ENCODE measurements at regions of chr4 and their contacts with region 1.

Region 1: DNA sequence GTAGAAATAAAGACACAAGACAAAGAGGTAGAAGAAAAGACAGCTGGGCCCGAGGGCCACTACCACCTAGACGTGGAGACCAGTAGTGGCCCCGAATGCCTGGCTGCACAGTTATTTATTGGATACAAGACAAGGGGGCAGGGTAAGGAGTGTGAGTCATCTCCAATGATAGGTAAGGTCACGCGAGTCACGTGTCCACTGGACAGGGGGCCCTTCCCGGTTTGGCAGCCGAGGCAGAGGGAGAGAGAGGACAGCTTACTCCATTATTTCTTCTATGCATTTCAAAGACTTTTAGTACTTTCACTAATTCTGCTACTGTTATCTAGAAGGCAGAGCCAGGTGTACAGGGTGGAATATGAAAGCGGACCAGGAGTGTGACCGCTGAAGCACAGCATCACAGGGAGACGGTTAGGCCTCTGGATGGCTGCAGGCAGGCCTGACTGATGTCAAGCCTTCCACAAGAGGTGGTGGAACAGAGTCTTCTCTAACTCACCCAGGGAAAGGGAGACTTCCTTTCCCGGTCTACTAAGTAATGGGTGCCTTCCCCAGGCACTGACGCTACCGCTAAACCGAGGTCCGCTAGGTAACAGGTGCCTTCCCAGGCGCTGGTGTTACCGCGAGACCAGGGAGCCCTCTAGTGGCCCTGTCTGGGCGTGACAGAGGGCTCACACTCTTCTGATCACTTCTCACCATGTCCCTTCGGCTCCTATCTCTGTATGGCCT is 44.9 kb downstream of the ZBTB49 start:
- DNase-seq: peak; percentile 63 to 87 (median 83)
- ATAC-seq: peak in 1 of 2 donors; percentile 47
- H3K4me3 ChIP-seq: no peak overlapping the region
- H3K27ac ChIP-seq: no peak overlapping the region
- H3K4me1 ChIP-seq: peaks cover 1% of the 10 kb centered on the region
- H3K27me3 ChIP-seq: no peaks in the 10 kb centered on the region

Region 2: GRCh38 chr4:4256799-4257198 is 78.2 kb before region 1 on chr4:
- intact Hi-C with region 1: loop called (anchors 5 kb)
- DNase-seq: peak in 1 of 3 donors; percentile 25
- ATAC-seq: peak in 1 of 2 donors; percentile 88
- H3K4me3 ChIP-seq: no peak overlapping the region
- H3K27ac ChIP-seq: no peak overlapping the region
- H3K4me1 ChIP-seq: no peaks in the 10 kb centered on the region
- H3K27me3 ChIP-seq: no peaks in the 10 kb centered on the region

Region 3: GRCh38 chr4:4296283-4296846 is 38.6 kb before region 1 on chr4:
- intact Hi-C with region 1: no loop called
- DNase-seq: no peak
- ATAC-seq: no peak
- H3K4me3 ChIP-seq: no peak overlapping the region
- H3K27ac ChIP-seq: no peak overlapping the region
- H3K4me1 ChIP-seq: peaks cover 2% of the 10 kb centered on the region
- H3K27me3 ChIP-seq: no peaks in the 10 kb centered on the region

Measured in right cardiac atrium (tissue), 5 donors.